Activated CD4-positive, alpha-beta memory T cell treated with anti-CD3 and anti-CD28 coated beads for 36 hours (primary cell): ENCODE measurements at regions of chr14 and their contacts with region 1.

Region 1: DNA sequence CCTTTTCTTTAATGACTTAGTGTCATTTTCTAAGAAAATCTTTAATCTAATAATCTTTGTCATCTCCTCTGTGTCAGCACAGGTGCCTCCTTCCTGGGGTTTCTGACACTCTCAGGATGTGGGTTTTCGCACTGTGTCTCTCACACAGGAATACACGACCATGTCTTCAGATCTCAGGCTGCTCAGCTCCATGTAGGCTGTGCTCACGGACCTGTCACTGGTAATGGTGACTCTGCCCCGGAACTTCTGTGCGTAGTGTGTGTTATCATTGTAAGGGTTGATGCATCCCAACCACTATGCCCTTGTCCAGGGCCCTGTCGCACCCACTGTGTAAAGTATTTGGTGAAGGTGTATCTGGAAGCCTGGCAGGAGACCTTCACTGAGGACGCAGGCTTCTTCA is 647.8 kb downstream of the TMEM121 start:
- DNase-seq: peak; percentile 74
- H3K4me3 Mint-ChIP-seq: no peak overlapping the region
- H3K27ac Mint-ChIP-seq: peak overlapping the region; percentile 18
- H3K4me1 Mint-ChIP-seq: peaks cover 54% of the 10 kb centered on the region
- H3K27me3 Mint-ChIP-seq: no peaks in the 10 kb centered on the region

Region 2: DNA sequence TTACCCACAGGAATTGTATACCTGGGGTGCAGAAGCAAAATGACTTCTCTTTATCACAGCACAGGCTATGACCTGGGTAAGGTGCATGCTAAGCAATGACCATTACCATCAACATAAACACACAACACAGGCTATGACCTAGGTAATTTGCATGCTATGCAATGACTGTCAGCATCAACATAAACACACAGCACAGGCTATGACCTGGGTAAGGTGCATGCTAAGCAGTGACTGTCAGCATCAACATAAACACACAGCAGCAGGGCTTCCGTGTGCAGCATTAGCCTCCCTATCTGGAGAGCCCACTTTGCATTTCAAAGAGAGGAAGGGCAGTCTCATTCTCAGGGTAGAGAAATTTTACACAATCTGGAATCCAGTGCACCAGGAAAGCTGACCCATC is 64.9 kb before region 1 on chr14:
- CTCF ChIA-PET with region 1: no interaction called
- POLR2A ChIA-PET with region 1: no interaction called
- intact Hi-C with region 1: no loop called
- DNase-seq: no peak
- H3K4me3 Mint-ChIP-seq: no peak overlapping the region
- H3K27ac Mint-ChIP-seq: no peak overlapping the region
- H3K4me1 Mint-ChIP-seq: no peaks in the 10 kb centered on the region
- H3K27me3 Mint-ChIP-seq: peaks cover 5% of the 10 kb centered on the region

Region 3: DNA sequence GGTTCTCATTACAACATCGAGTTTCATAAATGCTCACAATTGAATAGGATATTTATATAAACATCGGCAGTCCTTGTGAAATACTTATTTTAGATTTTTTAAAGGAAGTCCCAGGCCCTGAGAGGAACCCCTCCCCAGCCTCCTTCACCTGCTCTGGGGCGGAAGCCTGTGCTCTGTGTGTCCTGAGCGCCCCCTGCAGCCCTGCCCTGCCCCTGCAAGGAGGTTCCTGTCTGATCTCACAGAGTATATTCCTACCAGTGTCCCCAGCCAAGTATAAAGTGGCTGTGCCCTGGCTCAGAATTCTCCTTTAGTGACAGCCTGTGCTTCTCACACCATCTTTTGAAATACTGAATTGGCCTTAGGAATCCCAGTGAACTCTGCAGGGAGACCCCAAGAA is 11.6 kb after region 1 on chr14:
- CTCF ChIA-PET with region 1: interaction called, 12 read pairs
- POLR2A ChIA-PET with region 1: no interaction called
- intact Hi-C with region 1: loop called (anchors 1 kb)
- DNase-seq: peak; percentile 82
- H3K4me3 Mint-ChIP-seq: no peak overlapping the region
- H3K27ac Mint-ChIP-seq: no peak overlapping the region
- H3K4me1 Mint-ChIP-seq: peaks cover 37% of the 10 kb centered on the region
- H3K27me3 Mint-ChIP-seq: no peaks in the 10 kb centered on the region

Region 4: GRCh38 chr14:106210652-106211051 is 36.4 kb after region 1 on chr14:
- CTCF ChIA-PET with region 1: no interaction called
- POLR2A ChIA-PET with region 1: no interaction called
- intact Hi-C with region 1: no loop called
- DNase-seq: peak; percentile 60
- H3K4me3 Mint-ChIP-seq: no peak overlapping the region
- H3K27ac Mint-ChIP-seq: no peak overlapping the region
- H3K4me1 Mint-ChIP-seq: peaks cover 17% of the 10 kb centered on the region
- H3K27me3 Mint-ChIP-seq: peaks cover 4% of the 10 kb centered on the region

Region 5: GRCh38 chr14:106491851-106492250 is 317.6 kb after region 1 on chr14:
- CTCF ChIA-PET with region 1: no interaction called
- POLR2A ChIA-PET with region 1: no interaction called
- intact Hi-C with region 1: no loop called
- DNase-seq: peak; percentile 50
- H3K4me3 Mint-ChIP-seq: no peak overlapping the region
- H3K27ac Mint-ChIP-seq: no peak overlapping the region
- H3K4me1 Mint-ChIP-seq: peaks cover 21% of the 10 kb centered on the region
- H3K27me3 Mint-ChIP-seq: no peaks in the 10 kb centered on the region